ENCODE measurements at regions of chr20 and their contacts with region 1.

Region 1: DNA sequence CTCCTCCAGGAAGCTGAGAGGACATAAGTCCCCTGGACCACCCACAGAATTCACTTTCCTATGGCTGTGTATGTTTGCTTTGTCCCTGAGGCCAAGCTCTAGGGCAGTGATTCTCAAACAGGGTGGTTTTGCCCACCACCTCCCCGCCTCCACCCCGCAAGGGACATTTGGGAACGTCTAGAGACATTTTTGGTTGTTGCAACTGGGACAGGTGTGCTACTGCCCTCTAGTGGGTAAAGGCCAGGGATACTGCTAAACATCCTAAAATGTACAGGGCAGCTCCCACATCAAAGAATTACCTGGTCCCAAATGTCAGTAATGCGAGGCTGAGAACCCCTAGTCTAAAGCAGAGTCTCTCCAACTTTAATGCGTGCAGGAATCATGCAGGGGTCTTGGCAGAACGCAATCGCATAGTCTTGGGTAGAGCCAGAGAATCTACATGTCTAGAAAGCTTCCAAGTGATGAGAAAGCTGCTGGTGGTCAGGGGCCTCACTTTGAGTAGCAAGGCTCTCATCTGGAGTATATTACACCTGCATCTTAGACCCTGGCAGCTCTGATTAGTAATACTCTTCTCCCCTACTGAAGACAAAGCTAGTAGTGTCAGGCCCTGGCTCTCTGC is 5.1 kb downstream of the KCNS1 start:
- DNase-seq: peak; percentile 52 to 64 (median 61)
- H3K4me3 ChIP-seq: no peak overlapping the region
- H3K4me3 Mint-ChIP-seq: peak overlapping the region in 1 of 8 donors; percentile 51
- H3K27ac ChIP-seq: no peak overlapping the region
- H3K27ac Mint-ChIP-seq: peak overlapping the region in 2 of 7 donors; percentile 25 to 57
- H3K4me1 ChIP-seq: peaks cover 11% of the 10 kb centered on the region
- H3K4me1 Mint-ChIP-seq: peaks cover 3 to 19% (median 13%) of the 10 kb centered on the region in 4 donors
- H3K27me3 ChIP-seq: peaks cover 27% of the 10 kb centered on the region
- H3K27me3 Mint-ChIP-seq: peaks cover 26 to 35% of the 10 kb centered on the region in 2 donors

Region 2: GRCh38 chr20:44683263-44684046 is 412.4 kb before region 1 on chr20:
- CTCF ChIA-PET with region 1: interaction called, 20 read pairs
- POLR2A ChIA-PET with region 1: no interaction called
- intact Hi-C with region 1: no loop called
- DNase-seq: peak; percentile 45 to 68 (median 53)
- H3K4me3 ChIP-seq: no peak overlapping the region
- H3K4me3 Mint-ChIP-seq: no peak overlapping the region
- H3K27ac ChIP-seq: no peak overlapping the region
- H3K27ac Mint-ChIP-seq: peak overlapping the region in 2 of 7 donors; percentile 2 to 10
- H3K4me1 ChIP-seq: peaks cover 8% of the 10 kb centered on the region
- H3K4me1 Mint-ChIP-seq: peaks cover 0 to 15% (median 7%) of the 10 kb centered on the region in 4 donors
- H3K27me3 ChIP-seq: no peaks in the 10 kb centered on the region
- H3K27me3 Mint-ChIP-seq: peaks cover 4 to 8% of the 10 kb centered on the region in 2 donors

Region 3: DNA sequence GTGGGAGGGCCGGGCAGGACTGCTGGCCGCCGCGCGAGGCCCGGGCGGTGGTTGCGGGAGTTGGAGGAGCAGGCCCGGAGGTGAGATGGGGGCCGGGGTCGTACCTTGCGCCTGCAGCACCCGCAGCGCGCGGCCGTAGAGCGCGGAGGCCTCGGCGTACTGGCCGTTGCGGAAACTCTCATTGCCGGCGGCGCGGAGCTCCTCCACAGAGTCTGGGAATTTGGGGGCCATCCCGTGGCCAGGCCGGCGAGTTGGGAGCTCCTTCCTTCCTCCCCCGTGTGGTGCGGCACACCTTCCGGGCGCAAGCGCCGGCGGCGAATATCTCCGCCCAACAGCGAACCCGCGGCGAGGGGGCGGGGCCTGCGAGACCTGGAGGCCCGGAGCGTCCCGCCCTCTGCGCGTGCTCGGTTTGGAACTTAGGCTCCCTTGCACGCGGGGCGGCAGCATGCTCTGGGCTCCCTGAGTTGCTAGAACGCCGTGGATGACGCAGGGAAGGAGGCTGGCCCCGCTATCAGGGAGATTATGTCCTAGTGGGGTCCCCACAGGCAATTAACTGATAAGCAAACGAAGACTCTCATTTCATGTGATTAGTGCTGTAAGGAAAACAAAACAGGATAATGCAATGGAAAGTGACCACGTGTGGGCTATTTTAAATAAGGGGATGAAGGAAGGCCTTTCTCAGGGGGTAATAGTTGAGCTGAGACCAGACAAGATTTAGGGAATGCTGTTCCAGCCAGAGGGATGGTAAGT is 135.6 kb before region 1 on chr20 and contains the start of gene TOMM34:
- CTCF ChIA-PET with region 1: interaction called, 28 read pairs
- POLR2A ChIA-PET with region 1: interaction called, 5 read pairs
- intact Hi-C with region 1: no loop called
- DNase-seq: peak; percentile 89 to 91 (median 90)
- H3K4me3 ChIP-seq: peak within 1 kb of the TSS; percentile 54 to 67
- H3K4me3 Mint-ChIP-seq: peak within 1 kb of the TSS; percentile 94 to 100 (median 98)
- H3K27ac ChIP-seq: peak within 1 kb of the TSS; percentile 66
- H3K27ac Mint-ChIP-seq: peak within 1 kb of the TSS; percentile 84 to 99 (median 96)
- H3K4me1 ChIP-seq: peaks cover 34% of the 10 kb centered on the region
- H3K4me1 Mint-ChIP-seq: peaks cover 35 to 51% (median 38%) of the 10 kb centered on the region in 4 donors
- H3K27me3 ChIP-seq: no peaks in the 10 kb centered on the region
- H3K27me3 Mint-ChIP-seq: no peaks in the 10 kb centered on the region
- total RNA-seq, gene TOMM34: 7.6 to 8.5 TPM

Region 4: DNA sequence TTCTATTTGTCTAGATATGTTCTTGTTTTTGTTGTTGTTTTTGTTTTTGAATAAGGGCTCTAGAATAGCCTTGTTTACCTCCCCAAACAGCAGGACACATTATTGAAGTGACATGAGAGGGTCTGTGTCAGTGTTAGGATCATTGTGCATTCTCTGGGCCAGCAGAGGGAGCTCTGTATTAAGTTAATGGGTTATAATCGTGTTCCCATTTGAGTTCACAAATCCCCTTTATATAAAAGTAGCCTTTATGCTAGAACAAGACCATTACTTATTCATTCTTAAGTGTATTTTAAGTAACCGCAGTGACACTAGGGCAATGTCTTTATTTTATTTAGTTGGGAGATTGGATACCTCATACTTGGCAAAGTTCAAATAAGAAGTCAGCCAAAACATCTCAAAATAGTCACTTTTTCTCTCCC is 84.7 kb before region 1 on chr20:
- CTCF ChIA-PET with region 1: interaction called, 58 read pairs
- POLR2A ChIA-PET with region 1: interaction called, 4 read pairs
- intact Hi-C with region 1: loop called (anchors 1 kb)
- DNase-seq: peak; percentile 25 to 51 (median 40)
- H3K4me3 ChIP-seq: no peak overlapping the region
- H3K4me3 Mint-ChIP-seq: peak overlapping the region in 3 of 8 donors; percentile 17 to 54 (median 22)
- H3K27ac ChIP-seq: no peak overlapping the region
- H3K27ac Mint-ChIP-seq: peak overlapping the region in 3 of 7 donors; percentile 41 to 74 (median 57)
- H3K4me1 ChIP-seq: peaks cover 63% of the 10 kb centered on the region
- H3K4me1 Mint-ChIP-seq: peaks cover 47 to 81% (median 63%) of the 10 kb centered on the region in 4 donors
- H3K27me3 ChIP-seq: no peaks in the 10 kb centered on the region
- H3K27me3 Mint-ChIP-seq: no peaks in the 10 kb centered on the region

Region 5: DNA sequence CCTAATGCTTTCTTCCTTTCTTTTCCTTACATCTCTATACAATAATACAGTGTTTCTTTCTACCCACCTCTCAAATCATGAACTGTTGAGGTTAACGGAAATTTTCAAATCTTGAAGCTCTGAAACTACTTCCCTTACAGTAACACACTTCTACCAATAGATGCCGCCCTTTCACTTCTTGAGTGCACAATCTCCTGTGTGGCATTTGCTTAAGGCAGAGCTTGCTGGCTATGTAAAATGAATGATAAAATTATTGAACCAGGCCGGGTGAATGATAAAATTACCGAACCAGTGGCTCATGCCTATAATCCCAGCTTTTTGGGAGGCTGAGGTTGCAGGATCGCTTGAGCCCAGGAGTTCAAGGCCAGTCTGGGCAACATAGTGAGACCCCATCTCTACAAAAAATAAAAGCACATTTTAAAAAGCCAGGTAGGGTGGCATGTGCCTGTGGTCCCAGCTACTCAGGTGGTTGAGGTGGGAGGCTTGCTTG is 51.7 kb before region 1 on chr20:
- CTCF ChIA-PET with region 1: interaction called, 69 read pairs
- POLR2A ChIA-PET with region 1: interaction called, 6 read pairs
- intact Hi-C with region 1: loop called (anchors 1 kb)
- DNase-seq: peak; percentile 60 to 73 (median 64)
- H3K4me3 ChIP-seq: no peak overlapping the region
- H3K4me3 Mint-ChIP-seq: peak overlapping the region in 3 of 8 donors; percentile 1 to 17 (median 5)
- H3K27ac ChIP-seq: no peak overlapping the region
- H3K27ac Mint-ChIP-seq: peak overlapping the region; percentile 5 to 91 (median 58)
- H3K4me1 ChIP-seq: peaks cover 78% of the 10 kb centered on the region
- H3K4me1 Mint-ChIP-seq: peaks cover 49 to 85% (median 67%) of the 10 kb centered on the region in 4 donors
- H3K27me3 ChIP-seq: no peaks in the 10 kb centered on the region
- H3K27me3 Mint-ChIP-seq: no peaks in the 10 kb centered on the region

Region 6: DNA sequence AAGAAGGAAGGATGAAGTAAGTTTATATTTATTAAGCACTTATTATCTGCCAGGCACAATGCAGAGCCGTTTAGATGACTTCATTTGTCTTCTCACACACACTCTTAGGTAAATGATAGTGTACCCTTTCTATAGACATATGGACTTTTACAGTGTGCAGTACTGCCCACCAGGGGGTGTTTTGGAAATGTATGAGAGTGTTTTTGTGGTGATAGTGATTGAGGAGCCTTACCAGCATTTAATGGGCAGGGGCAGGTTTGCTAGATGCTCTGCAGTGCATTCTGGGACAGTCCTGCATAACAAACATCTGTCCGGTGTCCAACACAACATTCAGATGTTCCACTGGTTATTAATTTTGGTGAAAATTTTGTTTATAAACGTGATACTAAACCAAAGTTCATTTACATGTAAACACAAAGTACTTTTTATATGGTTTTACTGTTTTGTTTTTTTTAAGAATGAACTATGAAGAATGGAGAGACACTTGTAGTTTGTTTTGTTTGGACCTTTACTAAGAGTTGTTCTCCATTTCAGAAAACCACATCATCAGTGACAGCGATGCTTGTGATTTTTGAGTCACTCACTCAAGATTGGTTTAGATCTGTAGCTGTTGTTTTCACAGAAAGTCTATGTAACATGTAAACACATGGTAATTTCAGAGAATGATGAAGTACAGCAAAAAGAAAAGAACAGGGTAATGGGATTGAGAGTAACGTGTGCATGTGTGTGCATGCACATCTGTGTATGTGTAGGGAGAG is 14.8 kb before region 1 on chr20:
- CTCF ChIA-PET with region 1: interaction called, 17 read pairs
- POLR2A ChIA-PET with region 1: no interaction called
- intact Hi-C with region 1: no loop called
- DNase-seq: no peak
- H3K4me3 ChIP-seq: no peak overlapping the region
- H3K4me3 Mint-ChIP-seq: peak overlapping the region in 2 of 8 donors; percentile 2 to 49
- H3K27ac ChIP-seq: no peak overlapping the region
- H3K27ac Mint-ChIP-seq: peak overlapping the region in 5 of 7 donors; percentile 31 to 72 (median 62)
- H3K4me1 ChIP-seq: no peaks in the 10 kb centered on the region
- H3K4me1 Mint-ChIP-seq: peaks cover 4 to 13% (median 9%) of the 10 kb centered on the region in 4 donors
- H3K27me3 ChIP-seq: no peaks in the 10 kb centered on the region
- H3K27me3 Mint-ChIP-seq: no peaks in the 10 kb centered on the region